ENCODE measurements at regions of chr1 and their contacts with region 1.

Region 1: GRCh38 chr1:8848663-8849386 is 29.7 kb downstream of the ENO1 start:
- DNase-seq: peak; percentile 97
- H3K4me3 ChIP-seq: peak overlapping the region in 1 of 2 experiments; percentile 44; a peak in 1 of 4 replicates
- H3K27ac ChIP-seq: peak overlapping the region in 1 of 2 experiments; percentile 41; a peak in 2 of 4 replicates
- H3K4me1 ChIP-seq: peaks cover 5 to 28% of the 10 kb centered on the region in 2 experiments; a peak in 1 of 4 replicates
- H3K27me3 ChIP-seq: no peaks in the 10 kb centered on the region
- CTCF ChIP-seq: peak; percentile 78
- EP300 ChIP-seq: peak in 1 of 2 experiments; percentile 33; a peak in 1 of 4 replicates
- RAD21 ChIP-seq: peak; percentile 92

Region 2: DNA sequence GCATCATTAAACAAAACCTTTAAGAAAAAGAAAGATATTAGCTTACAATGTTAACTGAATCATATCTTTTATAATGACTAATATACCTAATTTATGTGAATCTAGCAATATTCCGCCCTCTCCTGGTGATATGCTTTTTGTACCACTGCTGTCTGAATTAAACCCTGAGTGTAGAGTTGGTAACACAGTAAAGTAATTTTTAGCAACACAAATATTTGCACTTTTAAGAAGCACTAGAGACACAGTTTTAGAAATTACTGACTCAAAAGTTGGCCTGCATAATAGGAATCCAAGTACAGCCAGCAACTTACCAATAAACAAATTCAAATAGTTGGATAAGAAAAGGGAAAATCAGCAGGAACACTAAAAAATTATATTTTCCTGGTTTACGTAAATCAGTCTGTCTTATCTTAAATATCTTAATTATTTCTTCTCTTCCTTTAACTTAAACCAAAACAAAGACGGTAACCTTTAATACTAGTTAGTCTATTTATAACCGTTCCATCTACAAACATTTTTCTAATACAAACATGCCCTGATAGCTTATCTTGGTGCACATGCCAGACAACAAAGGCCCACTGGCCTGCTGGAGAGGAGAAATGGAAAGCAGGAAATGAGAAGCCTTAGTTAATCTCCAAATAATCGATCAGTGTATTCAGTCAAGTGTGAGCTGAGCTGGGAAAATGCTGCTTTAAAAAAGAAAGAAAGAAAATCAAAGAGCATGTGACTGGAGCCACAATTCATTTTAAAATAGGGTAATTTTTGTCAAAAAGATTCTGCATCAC is 277.4 kb before region 1 on chr1:
- CTCF ChIA-PET with region 1: interaction called, 17 read pairs
- POLR2A ChIA-PET with region 1: no interaction called
- DNase-seq: peak; percentile 43
- H3K4me3 ChIP-seq: no peak overlapping the region; a peak in 1 of 4 replicates
- H3K27ac ChIP-seq: peak overlapping the region; percentile 34 to 90; a peak in 3 of 4 replicates
- H3K4me1 ChIP-seq: peaks cover 18 to 21% of the 10 kb centered on the region in 2 experiments; a peak in 3 of 4 replicates
- H3K27me3 ChIP-seq: no peaks in the 10 kb centered on the region
- CTCF ChIP-seq: peak; percentile 68
- EP300 ChIP-seq: peak in 1 of 2 experiments; percentile 6; a peak in 1 of 4 replicates
- RAD21 ChIP-seq: peak; percentile 51

Region 3: GRCh38 chr1:8679395-8679800 is 169.4 kb before region 1 on chr1:
- CTCF ChIA-PET with region 1: interaction called, 11 read pairs
- POLR2A ChIA-PET with region 1: interaction called, 3 read pairs
- DNase-seq: no peak
- H3K4me3 ChIP-seq: no peak overlapping the region
- H3K27ac ChIP-seq: peak overlapping the region; percentile 25 to 32; a peak in 3 of 4 replicates
- H3K4me1 ChIP-seq: peaks cover 19 to 29% of the 10 kb centered on the region in 2 experiments; a peak in 3 of 4 replicates
- H3K27me3 ChIP-seq: no peaks in the 10 kb centered on the region
- CTCF ChIP-seq: no peak
- EP300 ChIP-seq: no peak
- RAD21 ChIP-seq: no peak

Region 4: DNA sequence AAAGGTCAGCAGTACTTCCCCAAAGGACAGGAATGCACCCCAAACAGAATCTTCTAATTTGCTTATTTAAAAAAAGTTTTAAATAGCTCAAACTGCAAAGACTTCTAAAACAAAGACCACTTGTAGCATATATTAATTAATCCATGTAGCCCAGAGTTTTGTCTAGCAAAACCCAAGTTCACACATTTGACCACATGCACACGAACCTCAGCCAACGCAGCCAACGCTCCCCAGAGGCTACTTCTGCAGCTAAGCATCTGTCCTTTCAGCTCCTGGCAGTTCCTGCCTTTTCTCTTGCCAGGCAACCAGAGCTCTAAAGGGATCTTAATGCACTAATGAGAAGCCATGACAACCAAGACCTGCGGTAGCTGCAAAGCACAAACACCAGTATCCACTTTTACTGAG is 121.0 kb before region 1 on chr1:
- CTCF ChIA-PET with region 1: interaction called, 75 read pairs
- POLR2A ChIA-PET with region 1: interaction called, 5 read pairs
- DNase-seq: peak; percentile 70
- H3K4me3 ChIP-seq: no peak overlapping the region
- H3K27ac ChIP-seq: peak overlapping the region in 1 of 2 experiments; percentile 56; a peak in 1 of 4 replicates
- H3K4me1 ChIP-seq: peaks cover 0 to 4% of the 10 kb centered on the region in 2 experiments; a peak in 2 of 4 replicates
- H3K27me3 ChIP-seq: no peaks in the 10 kb centered on the region
- CTCF ChIP-seq: no peak
- EP300 ChIP-seq: peak in 1 of 2 experiments; percentile 64; a peak in 1 of 4 replicates
- RAD21 ChIP-seq: peak; percentile 41; the same call in 1 of the 2 replicates

Region 5: DNA sequence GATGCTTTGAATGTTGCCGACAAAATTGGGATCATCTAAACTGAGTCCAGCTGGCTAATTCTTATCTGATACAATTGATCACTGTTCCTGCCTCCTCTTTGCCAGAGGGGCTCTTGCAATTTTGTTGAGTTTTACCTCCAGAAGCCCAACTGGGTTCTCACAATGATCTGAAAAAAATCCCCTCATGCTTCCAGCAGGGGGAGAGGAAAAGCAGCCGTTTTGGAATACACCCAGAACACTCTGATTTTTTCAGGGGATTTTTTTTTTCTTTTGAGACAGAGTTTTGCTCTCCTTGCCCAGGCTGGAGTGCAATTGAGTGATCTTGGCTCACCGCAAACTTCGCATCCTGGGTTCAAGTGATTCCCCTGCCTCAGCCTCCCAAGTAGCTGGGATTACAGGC is 17.5 kb before region 1 on chr1:
- CTCF ChIA-PET with region 1: interaction called, 13 read pairs
- POLR2A ChIA-PET with region 1: no interaction called
- DNase-seq: no peak
- H3K4me3 ChIP-seq: no peak overlapping the region
- H3K27ac ChIP-seq: no peak overlapping the region
- H3K4me1 ChIP-seq: no peaks in the 10 kb centered on the region
- H3K27me3 ChIP-seq: no peaks in the 10 kb centered on the region
- CTCF ChIP-seq: peak; percentile 46
- EP300 ChIP-seq: no peak
- RAD21 ChIP-seq: peak; percentile 27; the same call in 1 of the 2 replicates

Measured in SK-N-SH (cell line).